Activated CD8-positive, alpha-beta memory T cell treated with anti-CD3 and anti-CD28 coated beads, Interleukin-2, amount 10 ng/mL, durations not matched to agents 7 days and 5 days (primary cell): ENCODE measurements at regions of chr15 and their contacts with region 1.

Region 1: GRCh38 chr15:91271565-91272153 is 171.6 kb downstream of the SV2B start:
- DNase-seq: peak; percentile 69
- ATAC-seq: peak; percentile 72
- H3K4me3 Mint-ChIP-seq: no peak overlapping the region
- H3K27ac Mint-ChIP-seq: no peak overlapping the region
- H3K4me1 Mint-ChIP-seq: peaks cover 7% of the 10 kb centered on the region
- H3K27me3 Mint-ChIP-seq: peaks cover 32% of the 10 kb centered on the region

Region 2: DNA sequence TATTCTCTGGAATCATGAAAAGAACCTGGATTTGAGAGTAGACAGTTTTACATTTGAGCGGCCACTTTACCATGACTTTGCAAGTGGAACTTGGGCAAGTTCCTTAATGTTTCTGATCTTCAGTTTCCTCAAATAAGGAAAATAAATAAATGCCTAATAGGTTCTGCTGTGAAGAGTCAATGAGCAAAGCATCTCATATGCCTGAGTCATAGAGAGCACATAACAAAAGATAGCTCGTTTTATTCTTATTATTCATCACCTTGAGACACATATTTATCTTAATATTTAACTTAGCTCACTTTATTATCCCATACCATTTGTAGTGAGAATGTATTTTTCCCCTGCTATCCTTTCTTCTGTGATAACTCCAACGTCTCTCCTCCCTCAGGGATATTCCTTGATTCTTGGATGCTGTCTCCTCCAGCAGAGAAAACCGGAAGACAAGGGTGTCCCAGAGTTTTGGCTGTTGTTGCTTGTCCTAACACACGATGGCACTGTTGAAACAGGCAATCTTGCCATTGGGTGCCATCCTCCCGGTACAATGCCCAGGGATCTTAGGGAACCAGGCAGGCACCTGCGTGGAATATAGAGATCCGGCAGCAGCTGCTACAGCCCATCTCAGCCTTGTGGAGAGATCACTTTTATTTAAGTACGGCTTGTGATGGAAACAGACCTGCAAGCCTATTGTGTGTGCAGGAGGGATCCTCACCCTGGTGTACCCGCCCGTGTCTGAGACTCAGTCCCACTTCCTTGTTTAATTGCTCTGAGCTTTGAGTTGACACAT is 215.9 kb before region 1 on chr15:
- CTCF ChIA-PET with region 1: interaction called, 36 read pairs
- DNase-seq: peak; percentile 48
- ATAC-seq: peak; percentile 36
- H3K4me3 Mint-ChIP-seq: no peak overlapping the region
- H3K27ac Mint-ChIP-seq: no peak overlapping the region
- H3K4me1 Mint-ChIP-seq: no peaks in the 10 kb centered on the region
- H3K27me3 Mint-ChIP-seq: peaks cover 76% of the 10 kb centered on the region

Region 3: GRCh38 chr15:91249591-91249990 is 22.1 kb before region 1 on chr15:
- CTCF ChIA-PET with region 1: interaction called, 12 read pairs
- DNase-seq: no peak
- ATAC-seq: no peak
- H3K4me3 Mint-ChIP-seq: no peak overlapping the region
- H3K27ac Mint-ChIP-seq: no peak overlapping the region
- H3K4me1 Mint-ChIP-seq: no peaks in the 10 kb centered on the region
- H3K27me3 Mint-ChIP-seq: peaks cover 34% of the 10 kb centered on the region

Region 4: GRCh38 chr15:91258425-91258779 is 13.3 kb before region 1 on chr15:
- CTCF ChIA-PET with region 1: interaction called, 11 read pairs
- DNase-seq: peak; percentile 43
- ATAC-seq: peak; percentile 49
- H3K4me3 Mint-ChIP-seq: no peak overlapping the region
- H3K27ac Mint-ChIP-seq: no peak overlapping the region
- H3K4me1 Mint-ChIP-seq: peaks cover 2% of the 10 kb centered on the region
- H3K27me3 Mint-ChIP-seq: peaks cover 39% of the 10 kb centered on the region

Region 5: GRCh38 chr15:91369823-91370222 is 98.2 kb after region 1 on chr15:
- CTCF ChIA-PET with region 1: no interaction called
- DNase-seq: no peak
- ATAC-seq: no peak
- H3K4me3 Mint-ChIP-seq: no peak overlapping the region
- H3K27ac Mint-ChIP-seq: no peak overlapping the region
- H3K4me1 Mint-ChIP-seq: peaks cover 19% of the 10 kb centered on the region
- H3K27me3 Mint-ChIP-seq: peaks cover 14% of the 10 kb centered on the region